ENCODE measurements at regions of chr5 and their contacts with region 1.

Region 1: DNA sequence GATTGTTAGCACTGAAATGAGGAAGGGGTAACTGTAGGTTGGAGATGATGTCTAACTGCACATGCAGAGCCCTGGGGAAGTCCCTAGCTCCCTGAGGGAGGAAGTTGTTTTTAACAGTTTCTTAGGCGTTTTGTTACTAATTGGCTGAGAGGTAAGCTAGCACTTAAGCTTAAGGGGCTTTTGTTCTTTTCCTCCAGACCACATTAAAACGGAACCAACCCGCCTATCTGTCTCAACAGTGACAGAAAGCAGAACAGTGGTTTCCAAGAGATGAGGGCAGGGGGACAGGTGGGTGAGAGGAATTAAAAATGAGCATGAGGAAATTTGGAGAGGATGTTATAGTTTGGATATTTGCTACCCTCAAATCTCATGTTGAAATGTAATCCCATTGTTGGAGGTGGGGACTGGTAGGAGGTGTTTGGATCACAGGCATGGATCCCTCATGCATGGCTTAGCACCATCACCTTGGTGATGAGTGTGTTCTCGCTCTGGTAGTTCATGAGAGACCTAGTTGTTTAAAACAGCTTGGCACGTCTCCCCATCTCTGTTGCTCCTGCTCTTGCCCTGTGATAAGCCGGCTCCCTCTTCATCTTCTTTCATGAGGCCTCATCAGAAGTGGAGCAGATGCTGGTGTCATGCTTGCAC is 38.9 kb downstream of the LYRM7 start:
- DNase-seq: peak; percentile 65
- H3K4me3 Mint-ChIP-seq: peak overlapping the region; percentile 71
- H3K27ac Mint-ChIP-seq: peak overlapping the region; percentile 95
- H3K4me1 Mint-ChIP-seq: peaks cover 49% of the 10 kb centered on the region
- H3K27me3 Mint-ChIP-seq: no peaks in the 10 kb centered on the region

Region 2: GRCh38 chr5:131170540-131171275 is 38.9 kb before region 1 on chr5 and contains the start of gene LYRM7:
- CTCF ChIA-PET with region 1: no interaction called
- POLR2A ChIA-PET with region 1: no interaction called
- intact Hi-C with region 1: loop called (anchors 1 kb)
- DNase-seq: peak; percentile 98
- H3K4me3 Mint-ChIP-seq: peak within 1 kb of the TSS; percentile 97
- H3K27ac Mint-ChIP-seq: peak within 1 kb of the TSS; percentile 92
- H3K4me1 Mint-ChIP-seq: peaks cover 37% of the 10 kb centered on the region
- H3K27me3 Mint-ChIP-seq: no peaks in the 10 kb centered on the region
- total RNA-seq, gene LYRM7: 16.6 to 18.6 TPM

Region 3: DNA sequence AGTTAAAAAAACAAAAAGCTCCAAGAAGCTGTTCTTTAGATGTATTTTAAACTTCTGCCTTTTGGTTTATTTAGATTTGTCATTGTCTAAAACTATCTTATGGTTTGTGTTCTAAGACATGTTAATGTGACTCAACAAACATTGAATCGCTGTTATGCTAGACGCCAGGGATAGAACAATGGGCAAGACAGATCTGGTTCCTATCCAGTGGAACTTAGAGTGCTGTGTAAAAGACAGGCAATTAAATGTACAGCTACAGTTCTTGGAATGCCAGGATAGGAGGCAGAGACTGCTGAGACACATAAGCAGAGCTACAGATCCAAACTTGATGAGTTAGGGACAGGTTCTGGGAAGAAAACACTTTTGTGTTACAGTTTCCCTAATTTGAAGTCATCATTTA is 16.5 kb before region 1 on chr5:
- CTCF ChIA-PET with region 1: no interaction called
- POLR2A ChIA-PET with region 1: no interaction called
- intact Hi-C with region 1: no loop called
- DNase-seq: no peak
- H3K4me3 Mint-ChIP-seq: no peak overlapping the region
- H3K27ac Mint-ChIP-seq: no peak overlapping the region
- H3K4me1 Mint-ChIP-seq: peaks cover 7% of the 10 kb centered on the region
- H3K27me3 Mint-ChIP-seq: no peaks in the 10 kb centered on the region

Region 4: GRCh38 chr5:131224387-131225201 is 15.0 kb after region 1 on chr5:
- CTCF ChIA-PET with region 1: no interaction called
- POLR2A ChIA-PET with region 1: interaction called, 5 read pairs
- intact Hi-C with region 1: loop called (anchors 1 kb)
- DNase-seq: peak; percentile 34
- H3K4me3 Mint-ChIP-seq: no peak overlapping the region
- H3K27ac Mint-ChIP-seq: no peak overlapping the region
- H3K4me1 Mint-ChIP-seq: peaks cover 12% of the 10 kb centered on the region
- H3K27me3 Mint-ChIP-seq: no peaks in the 10 kb centered on the region